Endothelial cell of umbilical vein (primary cell): ENCODE measurements at regions of chr5 and their contacts with region 1.

Region 1: DNA sequence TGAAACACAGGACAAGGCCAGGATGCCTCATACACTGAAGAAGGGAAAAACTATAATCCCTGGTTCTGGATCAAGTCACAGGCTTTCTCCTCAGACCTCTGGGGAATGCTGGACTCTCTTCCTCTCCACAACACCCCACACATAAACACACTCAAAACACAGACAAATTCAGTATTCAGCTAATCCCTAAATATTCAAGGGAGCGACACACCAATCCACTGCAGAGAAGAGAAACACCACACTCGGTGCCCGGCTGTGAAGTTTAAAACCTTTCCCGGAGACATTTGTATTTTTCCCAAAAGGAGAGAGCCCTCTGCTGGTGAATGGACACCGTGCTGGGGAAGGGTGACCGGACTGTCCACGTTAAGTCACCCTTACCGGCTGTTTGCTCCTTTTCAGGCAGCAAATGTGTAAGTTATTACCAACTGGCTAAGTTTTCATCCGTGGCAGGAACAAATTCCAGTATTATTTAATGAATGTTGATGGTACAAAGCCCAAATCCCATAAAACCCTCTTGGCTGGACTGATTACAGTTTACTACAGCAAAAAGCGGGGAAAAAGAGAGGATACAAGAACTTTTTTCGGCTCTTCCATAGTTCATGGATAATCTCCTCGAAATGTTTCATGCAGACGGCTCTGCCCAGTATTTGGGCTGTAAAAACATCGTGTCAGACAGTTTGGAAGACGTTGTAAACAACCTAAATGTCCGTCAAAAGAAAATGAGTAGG is 130.9 kb upstream of the SLC30A5 start:
- DNase-seq: peak; percentile 60
- H3K4me3 ChIP-seq: no peak overlapping the region
- H3K27ac ChIP-seq: no peak overlapping the region
- H3K4me1 ChIP-seq: no peaks in the 10 kb centered on the region
- H3K27me3 ChIP-seq: no peaks in the 10 kb centered on the region
- CTCF ChIP-seq: peak; percentile 75 to 76
- POLR2A ChIP-seq: no peak

Region 2: GRCh38 chr5:68460147-68460798 is 502.6 kb before region 1 on chr5:
- CTCF ChIA-PET with region 1: no interaction called
- POLR2A ChIA-PET with region 1: no interaction called
- dilution Hi-C with region 1: no loop called
- intact Hi-C with region 1: loop called (anchors 5 kb)
- DNase-seq: peak; percentile 76
- H3K4me3 ChIP-seq: no peak overlapping the region
- H3K27ac ChIP-seq: no peak overlapping the region
- H3K4me1 ChIP-seq: peaks cover 4% of the 10 kb centered on the region
- H3K27me3 ChIP-seq: peaks cover 2 to 10% of the 10 kb centered on the region in 2 experiments
- CTCF ChIP-seq: peak; percentile 51 to 55
- POLR2A ChIP-seq: no peak

Region 3: DNA sequence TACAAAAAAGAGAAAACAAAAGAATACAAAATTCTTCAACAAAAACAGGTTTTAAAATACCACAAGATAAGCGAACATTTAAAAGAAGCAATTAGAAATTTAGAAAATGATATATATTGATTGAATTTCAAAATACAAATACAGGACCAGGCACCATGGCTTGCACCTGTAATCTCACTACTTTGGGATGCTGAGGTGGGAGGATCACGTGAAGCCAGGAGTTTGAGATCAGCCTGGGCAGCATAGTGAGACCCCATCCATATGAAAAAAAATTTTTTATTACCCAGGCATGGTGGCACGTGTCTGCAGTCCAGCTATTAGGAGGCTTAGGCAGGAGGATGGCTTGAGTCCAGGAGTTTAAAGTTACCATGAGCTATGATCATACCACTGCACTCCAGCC is 21.0 kb after region 1 on chr5:
- CTCF ChIA-PET with region 1: no interaction called
- POLR2A ChIA-PET with region 1: no interaction called
- dilution Hi-C with region 1: no loop called
- intact Hi-C with region 1: no loop called
- DNase-seq: no peak
- H3K4me3 ChIP-seq: no peak overlapping the region
- H3K27ac ChIP-seq: no peak overlapping the region
- H3K4me1 ChIP-seq: no peaks in the 10 kb centered on the region
- H3K27me3 ChIP-seq: peaks cover 0 to 7% of the 10 kb centered on the region in 2 experiments
- CTCF ChIP-seq: no peak
- POLR2A ChIP-seq: no peak